Activated CD4-positive, alpha-beta memory T cell treated with anti-CD3 and anti-CD28 coated beads, Interleukin-2, amount 10 ng/mL, durations not matched to agents 7 days and 5 days (primary cell): ENCODE measurements at regions of chr13 and their contacts with region 1.

Region 1: DNA sequence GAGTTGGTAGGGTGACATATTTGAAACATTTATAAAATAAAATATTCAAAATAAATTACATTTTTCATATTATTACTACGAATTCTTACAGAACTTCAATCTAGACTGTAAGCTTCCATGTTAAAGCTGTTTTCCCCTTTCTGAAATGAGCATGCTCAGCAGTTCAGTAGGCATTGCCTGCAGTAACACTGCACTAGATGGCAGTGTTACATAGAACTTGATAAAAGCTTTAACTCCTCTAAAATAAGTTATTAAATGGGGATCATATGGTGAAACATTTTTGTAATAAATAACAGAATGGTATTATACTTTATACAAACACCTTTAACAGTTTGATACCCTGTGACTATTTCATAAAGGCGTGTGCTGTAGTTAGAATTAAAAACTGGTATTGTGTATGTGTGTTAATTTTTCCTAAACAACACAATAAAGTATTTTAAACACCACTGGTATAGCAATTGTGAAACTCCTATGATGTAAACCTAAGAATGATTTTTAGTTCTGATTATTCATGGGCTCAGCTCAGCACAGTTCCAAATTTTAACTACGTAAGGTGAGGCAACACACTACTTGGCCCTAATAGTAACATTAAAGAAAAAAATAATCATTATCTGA is 11.6 kb upstream of the GPR18 start:
- DNase-seq: peak; percentile 34
- H3K4me3 Mint-ChIP-seq: no peak overlapping the region
- H3K27ac Mint-ChIP-seq: no peak overlapping the region
- H3K4me1 Mint-ChIP-seq: peaks cover 58% of the 10 kb centered on the region
- H3K27me3 Mint-ChIP-seq: no peaks in the 10 kb centered on the region

Region 2: GRCh38 chr13:98869408-98870090 is 400.2 kb before region 1 on chr13:
- CTCF ChIA-PET with region 1: interaction called, 18 read pairs
- POLR2A ChIA-PET with region 1: interaction called, 3 read pairs
- DNase-seq: no peak
- H3K4me3 Mint-ChIP-seq: no peak overlapping the region
- H3K27ac Mint-ChIP-seq: no peak overlapping the region
- H3K4me1 Mint-ChIP-seq: peaks cover 21% of the 10 kb centered on the region
- H3K27me3 Mint-ChIP-seq: no peaks in the 10 kb centered on the region

Region 3: GRCh38 chr13:99119686-99120085 is 150.0 kb before region 1 on chr13:
- CTCF ChIA-PET with region 1: no interaction called
- POLR2A ChIA-PET with region 1: no interaction called
- DNase-seq: no peak
- H3K4me3 Mint-ChIP-seq: no peak overlapping the region
- H3K27ac Mint-ChIP-seq: no peak overlapping the region
- H3K4me1 Mint-ChIP-seq: peaks cover 27% of the 10 kb centered on the region
- H3K27me3 Mint-ChIP-seq: no peaks in the 10 kb centered on the region

Region 4: GRCh38 chr13:99281811-99282263 is 12.1 kb after region 1 on chr13:
- CTCF ChIA-PET with region 1: interaction called, 33 read pairs
- POLR2A ChIA-PET with region 1: interaction called, 7 read pairs
- DNase-seq: peak; percentile 70
- H3K4me3 Mint-ChIP-seq: no peak overlapping the region
- H3K27ac Mint-ChIP-seq: peak overlapping the region; percentile 85
- H3K4me1 Mint-ChIP-seq: peaks cover 79% of the 10 kb centered on the region
- H3K27me3 Mint-ChIP-seq: no peaks in the 10 kb centered on the region

Region 5: DNA sequence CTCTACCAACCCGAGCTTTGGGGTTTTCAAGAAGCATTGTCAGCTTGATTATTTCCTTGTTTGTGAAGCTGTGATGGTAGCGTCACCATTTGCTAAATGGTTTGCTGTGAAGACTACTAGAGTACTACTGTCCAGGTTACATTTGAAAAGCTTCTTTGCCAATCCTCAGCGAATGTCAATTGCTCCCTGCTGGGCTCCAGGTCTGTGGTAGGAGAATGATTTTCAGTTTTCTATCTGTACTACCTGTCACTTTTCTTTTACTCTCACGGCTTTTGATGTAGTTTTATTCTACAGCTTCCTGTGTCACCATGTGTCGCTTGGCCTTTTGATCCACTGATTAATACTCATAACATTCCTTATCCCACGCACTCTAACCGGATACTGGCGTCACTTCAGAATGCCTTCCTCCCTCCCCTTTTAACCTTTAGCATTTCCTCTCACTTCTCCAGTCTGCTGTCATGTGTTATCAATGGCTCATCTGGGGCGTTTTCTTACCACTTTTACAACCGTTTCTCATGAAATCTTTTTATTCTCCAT is 45.0 kb after region 1 on chr13:
- CTCF ChIA-PET with region 1: interaction called, 10 read pairs
- POLR2A ChIA-PET with region 1: interaction called, 393 read pairs
- DNase-seq: peak; percentile 64
- H3K4me3 Mint-ChIP-seq: peak overlapping the region; percentile 68
- H3K27ac Mint-ChIP-seq: peak overlapping the region; percentile 89
- H3K4me1 Mint-ChIP-seq: peaks cover 76% of the 10 kb centered on the region
- H3K27me3 Mint-ChIP-seq: no peaks in the 10 kb centered on the region

Region 6: GRCh38 chr13:99366075-99366987 is 96.6 kb after region 1 on chr13:
- CTCF ChIA-PET with region 1: interaction called, 35 read pairs
- POLR2A ChIA-PET with region 1: interaction called, 5 read pairs
- DNase-seq: no peak
- H3K4me3 Mint-ChIP-seq: no peak overlapping the region
- H3K27ac Mint-ChIP-seq: no peak overlapping the region
- H3K4me1 Mint-ChIP-seq: peaks cover 82% of the 10 kb centered on the region
- H3K27me3 Mint-ChIP-seq: no peaks in the 10 kb centered on the region

Region 7: DNA sequence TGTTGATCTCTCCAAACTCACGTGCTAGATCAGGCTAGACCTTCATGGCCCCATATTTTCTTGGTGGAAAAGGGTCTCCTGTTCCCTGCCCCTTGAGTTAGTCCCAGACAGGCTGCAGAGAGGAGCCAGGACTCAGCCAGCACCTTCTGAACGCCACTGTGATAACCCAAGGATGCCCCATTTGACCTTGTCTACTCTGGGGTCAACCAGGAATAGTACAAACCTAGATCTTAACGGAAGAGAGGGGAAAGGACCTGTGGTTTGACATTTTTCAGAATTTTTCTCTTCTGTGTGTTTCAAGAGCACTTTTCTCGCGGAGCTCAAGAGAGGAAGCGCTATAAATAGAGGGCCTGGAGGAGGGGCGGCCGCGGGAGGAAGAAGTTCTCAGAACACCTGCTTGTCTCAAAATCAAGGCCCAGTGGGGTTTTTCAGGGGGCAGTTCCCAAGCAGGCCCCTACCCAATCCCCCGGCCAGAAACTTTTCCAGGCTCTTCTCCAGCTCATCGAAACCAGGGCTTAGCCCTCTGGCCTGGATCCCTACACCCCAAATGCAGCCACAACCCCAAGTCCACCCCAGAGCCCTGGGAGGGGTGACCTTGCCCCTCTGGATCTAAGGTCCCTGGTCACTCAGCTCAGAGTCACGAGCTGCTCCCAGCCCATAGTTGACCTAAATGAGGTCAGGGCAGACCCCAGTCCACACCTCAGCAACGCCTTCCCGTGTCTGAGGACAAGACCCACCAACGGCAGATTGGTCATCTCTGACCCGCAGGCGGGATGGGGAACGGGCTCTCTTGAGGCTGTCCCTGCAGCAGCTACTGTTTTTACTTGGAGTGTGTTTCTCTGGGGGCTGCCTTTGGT is 156.0 kb after region 1 on chr13:
- CTCF ChIA-PET with region 1: interaction called, 11 read pairs
- POLR2A ChIA-PET with region 1: interaction called, 4 read pairs
- DNase-seq: peak; percentile 61
- H3K4me3 Mint-ChIP-seq: peak overlapping the region; percentile 34
- H3K27ac Mint-ChIP-seq: peak overlapping the region; percentile 81
- H3K4me1 Mint-ChIP-seq: peaks cover 37% of the 10 kb centered on the region
- H3K27me3 Mint-ChIP-seq: peaks cover 21% of the 10 kb centered on the region